MCF 10A (cell line): ENCODE measurements at regions of chr4 and their contacts with region 1.

Region 1: DNA sequence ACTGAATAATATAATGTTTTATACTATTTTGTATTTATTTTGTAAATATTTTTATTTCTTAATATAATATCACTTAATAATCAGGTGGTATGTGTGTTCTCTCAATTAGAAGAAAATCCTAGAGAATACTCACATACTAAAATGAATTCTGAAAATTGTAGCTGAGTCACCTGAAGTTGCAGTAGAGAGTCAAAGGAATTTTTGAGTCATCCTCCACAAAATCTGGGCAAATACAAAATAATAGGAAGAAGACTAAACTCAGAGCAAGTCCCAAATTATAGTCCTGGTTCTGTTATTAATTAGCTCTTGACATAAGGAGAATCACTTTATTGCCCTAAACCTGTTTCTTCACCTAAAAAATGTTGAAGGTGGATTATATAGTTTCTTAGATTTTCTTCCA is 57.8 kb downstream of the SPATA4 start:
- DNase-seq: peak; percentile 9
- H3K4me3 Mint-ChIP-seq: no peak overlapping the region
- H3K27ac Mint-ChIP-seq: no peak overlapping the region
- H3K4me1 Mint-ChIP-seq: no peaks in the 10 kb centered on the region
- H3K27me3 Mint-ChIP-seq: no peaks in the 10 kb centered on the region
- CTCF ChIP-seq: no peak

Region 2: GRCh38 chr4:175560604-175561003 is 577.0 kb before region 1 on chr4:
- CTCF ChIA-PET with region 1: no interaction called
- POLR2A ChIA-PET with region 1: no interaction called
- intact Hi-C with region 1: loop called (anchors 10 kb)
- DNase-seq: peak; percentile 55
- H3K4me3 Mint-ChIP-seq: no peak overlapping the region
- H3K27ac Mint-ChIP-seq: no peak overlapping the region
- H3K4me1 Mint-ChIP-seq: peaks cover 5% of the 10 kb centered on the region
- H3K27me3 Mint-ChIP-seq: no peaks in the 10 kb centered on the region
- CTCF ChIP-seq: peak; percentile 56

Region 3: GRCh38 chr4:175944126-175944910 is 193.3 kb before region 1 on chr4:
- CTCF ChIA-PET with region 1: no interaction called
- POLR2A ChIA-PET with region 1: no interaction called
- intact Hi-C with region 1: no loop called
- DNase-seq: no peak
- H3K4me3 Mint-ChIP-seq: no peak overlapping the region
- H3K27ac Mint-ChIP-seq: no peak overlapping the region
- H3K4me1 Mint-ChIP-seq: no peaks in the 10 kb centered on the region
- H3K27me3 Mint-ChIP-seq: no peaks in the 10 kb centered on the region
- CTCF ChIP-seq: no peak